ENCODE measurements at regions of chr1 and their contacts with region 1.

Region 1: DNA sequence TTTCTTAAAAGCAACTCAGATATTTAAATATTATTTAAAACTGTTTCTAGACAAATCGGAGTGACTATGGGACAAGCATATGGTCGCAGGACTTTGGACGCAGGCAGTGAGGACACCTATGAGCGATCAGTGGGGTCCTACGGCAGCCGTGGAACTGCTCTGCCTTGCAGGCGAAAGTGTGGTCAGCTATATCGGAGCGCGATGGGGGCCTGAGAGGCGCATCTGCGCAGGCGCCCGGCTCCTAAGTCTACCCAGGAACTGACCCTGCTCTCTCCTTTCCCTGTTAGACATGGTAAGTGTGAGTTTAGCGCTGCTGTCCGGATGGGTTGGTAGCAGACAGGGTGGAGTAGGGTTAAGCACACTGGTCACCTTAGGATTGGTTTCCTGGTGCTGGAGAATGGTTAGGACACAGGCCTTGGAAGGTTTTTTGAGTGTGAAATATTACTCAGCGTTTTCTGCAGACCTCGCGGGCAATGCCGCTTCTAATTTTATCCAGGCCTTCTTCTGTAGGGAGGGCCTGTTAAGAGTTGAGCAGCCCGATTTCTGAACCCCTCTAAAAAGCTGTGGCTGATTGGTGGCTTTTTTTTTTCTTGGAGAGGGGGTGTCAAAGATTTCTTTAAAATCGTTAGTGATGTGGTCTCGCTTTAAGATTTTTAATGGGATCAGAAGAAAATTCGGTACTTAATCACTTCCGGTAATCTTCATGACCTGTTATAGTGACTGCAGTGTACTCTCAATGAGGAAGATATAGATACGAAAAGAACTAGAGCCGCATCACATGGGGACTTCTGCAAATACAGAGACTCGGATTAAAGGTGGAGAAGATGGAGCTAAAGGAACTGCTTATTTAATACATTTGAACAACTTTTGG is at the start of gene RABGGTB:
- DNase-seq: peak; percentile 97
- ATAC-seq: peak; percentile 100
- H3K4me3 ChIP-seq: peak within 1 kb of the TSS; percentile 84 to 98
- H3K27ac ChIP-seq: peak within 1 kb of the TSS; percentile 71 to 85
- H3K4me1 ChIP-seq: peaks cover 2 to 11% of the 10 kb centered on the region in 2 donors
- H3K27me3 ChIP-seq: no peaks in the 10 kb centered on the region
- total RNA-seq, gene RABGGTB: 53.7 to 77.3 TPM

Region 2: DNA sequence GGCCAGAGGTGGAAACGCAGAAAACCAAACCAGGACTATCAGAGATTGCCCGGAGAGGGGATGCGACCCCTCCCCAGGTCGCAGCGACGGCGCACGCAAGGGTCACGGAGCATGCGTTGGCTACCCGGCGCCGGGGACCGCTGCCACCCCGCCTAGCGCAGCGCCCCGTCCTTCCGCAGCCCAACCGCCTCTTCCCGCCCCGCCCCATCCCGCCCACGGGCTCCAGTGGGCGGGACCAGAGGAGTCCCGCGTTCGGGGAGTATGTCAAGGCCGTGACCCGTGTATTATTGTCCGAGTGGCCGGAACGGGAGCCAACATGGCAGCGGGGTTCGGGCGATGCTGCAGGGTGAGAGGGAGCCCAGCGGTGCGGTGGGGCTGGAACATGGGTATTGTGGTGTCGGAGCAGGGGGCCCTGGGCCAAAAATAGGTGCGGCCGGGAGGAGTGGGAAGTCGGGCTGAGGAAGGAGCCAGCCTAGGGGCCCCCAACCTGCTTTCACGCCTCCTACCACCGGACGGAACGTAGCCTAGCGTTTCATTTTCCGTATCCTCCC is 61.7 kb before region 1 on chr1 and contains the start of gene ACADM:
- intact Hi-C with region 1: loop called (anchors 1 to 5 kb)
- DNase-seq: peak; percentile 91 to 96
- ATAC-seq: peak; percentile 98
- H3K4me3 ChIP-seq: peak within 1 kb of the TSS; percentile 56 to 62
- H3K27ac ChIP-seq: peak within 1 kb of the TSS; percentile 19 to 85
- H3K4me1 ChIP-seq: peaks cover 0 to 2% of the 10 kb centered on the region in 2 donors
- H3K27me3 ChIP-seq: no peaks in the 10 kb centered on the region
- total RNA-seq, gene ACADM: 39.8 to 41.1 TPM

Region 3: GRCh38 chr1:75768016-75768415 is 18.2 kb before region 1 on chr1:
- intact Hi-C with region 1: loop called in 1 of 2 experiments (anchors 2 kb)
- DNase-seq: no peak
- ATAC-seq: no peak
- H3K4me3 ChIP-seq: no peak overlapping the region
- H3K27ac ChIP-seq: no peak overlapping the region
- H3K4me1 ChIP-seq: no peaks in the 10 kb centered on the region
- H3K27me3 ChIP-seq: no peaks in the 10 kb centered on the region

Measured in aorta (tissue), 5 donors.